GM13977 (cell line): ENCODE measurements at regions of chr10 and their contacts with region 1.

Region 1: DNA sequence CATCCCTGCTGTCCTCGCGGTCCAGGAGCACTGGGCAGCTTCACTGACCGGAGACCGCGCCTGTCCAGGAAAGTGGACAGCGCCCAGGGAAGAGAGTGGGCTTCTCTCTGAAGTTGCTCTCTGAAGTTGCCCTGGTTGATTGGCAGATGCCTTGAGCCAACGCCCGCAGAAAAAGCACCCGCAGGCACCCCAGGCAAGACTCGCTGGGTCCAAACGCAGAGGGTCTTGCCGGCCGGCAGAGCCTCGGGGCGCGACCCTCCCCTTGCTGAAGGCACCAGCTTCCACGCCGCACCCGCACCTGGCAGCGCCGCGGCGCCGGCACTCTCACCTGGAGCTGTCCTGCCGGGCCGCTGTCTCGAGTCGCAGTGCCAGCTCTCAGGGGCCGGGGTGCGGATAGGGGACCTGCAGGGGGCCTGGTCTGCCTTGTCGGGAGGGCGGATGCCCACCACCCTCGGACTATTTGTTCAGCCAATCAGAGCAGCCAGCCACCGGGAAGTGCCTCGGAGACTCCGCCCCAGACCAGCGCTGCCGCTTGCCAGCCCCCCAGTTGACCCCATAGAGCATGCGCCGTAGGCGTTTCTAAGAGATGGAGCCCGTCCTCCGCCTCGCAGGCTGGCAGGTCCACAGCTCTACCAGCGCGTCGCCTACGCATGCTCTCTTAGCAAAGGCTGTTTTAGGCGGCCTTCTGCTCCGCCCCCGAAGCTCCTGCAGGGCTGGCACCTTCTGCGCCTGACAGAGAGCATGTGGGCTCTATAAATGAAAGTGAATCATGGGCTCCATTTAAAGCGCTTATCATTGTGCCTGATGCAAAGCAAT is at the start of gene LIPA:
- DNase-seq: peak; percentile 91
- CTCF ChIP-seq: no peak

Region 2: DNA sequence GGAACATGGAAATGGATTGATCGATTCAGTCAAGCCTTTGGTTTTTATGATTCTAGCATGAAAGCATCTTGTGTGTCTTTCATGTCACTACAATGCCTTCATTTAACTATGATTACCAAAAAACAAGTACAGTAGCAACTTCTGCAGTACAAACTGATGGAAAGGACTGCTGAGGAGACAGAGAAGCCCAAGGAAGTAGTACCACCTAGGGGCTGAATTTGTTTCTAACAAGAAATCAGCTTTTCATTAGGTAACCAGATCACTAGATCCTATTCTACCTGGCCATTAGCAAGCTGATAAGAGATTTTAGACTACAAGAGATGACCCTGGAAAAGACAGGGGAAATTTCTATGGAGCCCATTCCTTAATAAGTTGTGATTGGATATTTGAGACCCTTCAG is 137.6 kb after region 1 on chr10:
- in situ Hi-C with region 1: loop called (anchors 10 kb)
- DNase-seq: peak; percentile 29
- CTCF ChIP-seq: peak; percentile 45

Region 3: GRCh38 chr10:89450901-89451300 is 199.3 kb after region 1 on chr10:
- in situ Hi-C with region 1: no loop called
- DNase-seq: no peak
- CTCF ChIP-seq: no peak